Sciatic nerve (tissue), 2 donors: ENCODE measurements at regions of chr16 and their contacts with region 1.

Region 1: GRCh38 chr16:51756447-51757123 is 605.5 kb upstream of the SALL1 start:
- DNase-seq: no peak
- ATAC-seq: no peak

Region 2: GRCh38 chr16:52446080-52446479 is 689.5 kb after region 1 on chr16:
- intact Hi-C with region 1: loop called (anchors 5 kb)
- DNase-seq: no peak
- ATAC-seq: no peak

Region 3: GRCh38 chr16:52690468-52690867 is 933.9 kb after region 1 on chr16:
- intact Hi-C with region 1: no loop called
- DNase-seq: no peak
- ATAC-seq: no peak